MCF 10A (cell line): ENCODE measurements at regions of chr20 and their contacts with region 1.

Region 1: DNA sequence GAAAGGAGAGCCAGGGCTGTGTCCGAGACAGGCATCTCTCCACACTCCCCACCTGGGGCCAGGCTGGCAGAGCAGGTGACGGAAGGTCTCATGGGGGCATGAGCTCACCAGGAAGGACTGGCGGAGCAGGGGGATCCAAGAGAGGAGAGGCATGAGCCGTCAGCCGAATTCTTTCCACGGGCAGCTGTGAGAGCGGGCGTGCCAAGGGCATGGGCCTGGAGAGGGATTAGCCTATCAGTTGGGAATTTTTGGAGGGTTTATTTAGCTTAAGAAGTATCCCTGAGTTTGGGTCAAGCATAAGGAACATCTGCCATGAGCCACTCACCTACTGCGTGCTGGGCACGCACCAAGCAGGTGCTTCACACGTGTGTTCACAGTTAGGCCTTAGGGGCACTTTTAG is 60.2 kb upstream of the ZNFX1 start:
- DNase-seq: no peak
- H3K4me3 Mint-ChIP-seq: no peak overlapping the region
- H3K27ac Mint-ChIP-seq: peak overlapping the region; percentile 57
- H3K4me1 Mint-ChIP-seq: peaks cover 11% of the 10 kb centered on the region
- H3K27me3 Mint-ChIP-seq: peaks cover 3% of the 10 kb centered on the region
- CTCF ChIP-seq: no peak

Region 2: DNA sequence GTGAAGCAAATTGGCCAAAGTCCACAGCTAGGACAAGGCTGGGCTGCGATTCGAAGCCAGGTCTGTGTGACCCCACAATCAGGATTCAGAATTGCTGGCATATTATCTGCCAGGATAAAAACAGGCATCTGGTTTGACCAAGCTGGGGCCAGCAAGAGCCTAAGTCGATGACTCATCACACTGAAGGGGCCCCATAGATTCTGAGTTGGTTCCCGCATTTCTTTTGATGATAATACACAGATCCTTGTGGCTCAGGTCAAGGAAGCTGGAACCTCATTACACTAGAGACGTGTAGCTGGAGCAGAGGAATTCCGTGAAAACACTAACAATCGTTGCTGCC is 137.9 kb after region 1 on chr20:
- CTCF ChIA-PET with region 1: interaction called, 174 read pairs
- POLR2A ChIA-PET with region 1: no interaction called
- intact Hi-C with region 1: no loop called
- DNase-seq: no peak
- H3K4me3 Mint-ChIP-seq: no peak overlapping the region
- H3K27ac Mint-ChIP-seq: no peak overlapping the region
- H3K4me1 Mint-ChIP-seq: peaks cover 15% of the 10 kb centered on the region
- H3K27me3 Mint-ChIP-seq: no peaks in the 10 kb centered on the region
- CTCF ChIP-seq: no peak

Region 3: GRCh38 chr20:49519777-49520359 is 181.8 kb after region 1 on chr20:
- CTCF ChIA-PET with region 1: interaction called, 11 read pairs
- POLR2A ChIA-PET with region 1: no interaction called
- intact Hi-C with region 1: no loop called
- DNase-seq: no peak
- H3K4me3 Mint-ChIP-seq: no peak overlapping the region
- H3K27ac Mint-ChIP-seq: no peak overlapping the region
- H3K4me1 Mint-ChIP-seq: no peaks in the 10 kb centered on the region
- H3K27me3 Mint-ChIP-seq: no peaks in the 10 kb centered on the region
- CTCF ChIP-seq: no peak

Region 4: GRCh38 chr20:49534255-49534712 is 196.2 kb after region 1 on chr20:
- CTCF ChIA-PET with region 1: interaction called, 80 read pairs
- POLR2A ChIA-PET with region 1: interaction called, 6 read pairs
- intact Hi-C with region 1: loop called (anchors 1 kb)
- DNase-seq: peak; percentile 74
- H3K4me3 Mint-ChIP-seq: no peak overlapping the region
- H3K27ac Mint-ChIP-seq: no peak overlapping the region
- H3K4me1 Mint-ChIP-seq: peaks cover 4% of the 10 kb centered on the region
- H3K27me3 Mint-ChIP-seq: no peaks in the 10 kb centered on the region
- CTCF ChIP-seq: peak; percentile 87